Gastrocnemius medialis (tissue), 4 donors: ENCODE measurements at regions of chr6 and their contacts with region 1.

Region 1: DNA sequence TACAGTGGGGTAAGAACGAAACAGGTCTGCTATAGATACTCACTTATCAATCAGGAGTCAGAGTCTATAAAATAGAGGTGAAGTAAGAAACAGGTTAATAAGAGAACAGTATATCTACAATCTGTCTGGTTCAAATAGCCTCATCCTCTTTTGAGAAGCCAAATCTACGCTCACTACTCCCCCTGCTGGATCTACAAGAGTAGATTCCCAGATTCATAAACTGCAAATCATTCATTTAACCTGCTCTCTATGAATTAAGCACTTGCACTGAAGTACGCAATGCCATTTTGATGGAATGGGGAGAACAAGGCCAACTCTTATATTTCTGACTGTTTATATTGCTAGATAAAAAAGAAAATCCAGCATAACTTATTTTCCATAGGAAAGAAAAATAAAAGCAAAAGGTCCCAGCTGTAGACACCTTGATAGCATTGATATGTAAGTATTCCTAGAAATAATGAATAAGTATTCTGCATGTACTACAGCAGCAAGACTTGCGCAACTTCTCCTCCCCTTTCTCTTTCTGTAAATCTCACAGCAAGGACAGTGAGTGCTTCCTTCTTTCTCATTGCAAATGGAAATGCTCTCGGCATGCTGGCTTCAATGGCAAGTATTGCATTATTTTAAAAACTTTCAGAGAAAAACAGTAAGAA is 92.3 kb downstream of the RFX6 start:
- DNase-seq: peak in 1 of 2 donors; percentile 5
- ATAC-seq: peak in 1 of 2 donors; percentile 53
- H3K4me3 ChIP-seq: no peak overlapping the region
- H3K27ac ChIP-seq: no peak overlapping the region
- H3K4me1 ChIP-seq: peaks cover 9 to 13% of the 10 kb centered on the region in 2 donors
- H3K27me3 ChIP-seq: no peaks in the 10 kb centered on the region
- CTCF ChIP-seq: peak; percentile 35 to 72 (median 44)
- POLR2A ChIP-seq: no peak

Region 2: DNA sequence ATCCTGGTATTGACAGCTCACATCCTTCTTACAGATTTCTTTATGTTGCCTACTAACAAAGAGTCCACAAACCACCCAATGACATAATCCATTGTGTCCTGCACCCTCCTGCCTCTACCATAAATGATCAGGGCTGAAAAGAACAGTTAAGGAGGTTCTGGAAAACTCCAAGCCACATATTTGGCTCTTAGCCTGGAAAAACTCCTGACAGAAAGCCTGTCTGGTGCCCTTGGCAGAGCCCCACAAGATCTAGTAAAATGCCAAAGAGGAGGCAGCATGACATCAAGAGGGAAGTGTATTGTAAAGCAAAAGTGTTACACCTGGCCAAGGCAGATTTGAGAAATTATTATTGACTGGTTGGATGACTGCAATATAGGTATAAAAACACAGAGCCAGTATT is 169.6 kb after region 1 on chr6:
- in situ Hi-C with region 1: loop called in 1 of 4 experiments (anchors 10 kb)
- intact Hi-C with region 1: no loop called
- DNase-seq: peak; percentile 74 to 76
- ATAC-seq: peak; percentile 65 to 73
- H3K4me3 ChIP-seq: no peak overlapping the region
- H3K27ac ChIP-seq: peak overlapping the region; percentile 88 to 94 (median 92)
- H3K4me1 ChIP-seq: peaks cover 27 to 36% of the 10 kb centered on the region in 2 donors
- H3K27me3 ChIP-seq: no peaks in the 10 kb centered on the region
- CTCF ChIP-seq: no peak
- POLR2A ChIP-seq: no peak

Region 3: GRCh38 chr6:117317261-117317660 is 347.9 kb after region 1 on chr6:
- in situ Hi-C with region 1: loop called in 2 of 4 experiments (anchors 5 to 10 kb)
- intact Hi-C with region 1: loop called (anchors 5 kb)
- DNase-seq: no peak
- ATAC-seq: peak; percentile 73 to 79
- H3K4me3 ChIP-seq: no peak overlapping the region
- H3K27ac ChIP-seq: no peak overlapping the region
- H3K4me1 ChIP-seq: peaks cover 0 to 6% of the 10 kb centered on the region in 2 donors
- H3K27me3 ChIP-seq: no peaks in the 10 kb centered on the region
- CTCF ChIP-seq: peak; percentile 54 to 70 (median 63)
- POLR2A ChIP-seq: no peak

Region 4: DNA sequence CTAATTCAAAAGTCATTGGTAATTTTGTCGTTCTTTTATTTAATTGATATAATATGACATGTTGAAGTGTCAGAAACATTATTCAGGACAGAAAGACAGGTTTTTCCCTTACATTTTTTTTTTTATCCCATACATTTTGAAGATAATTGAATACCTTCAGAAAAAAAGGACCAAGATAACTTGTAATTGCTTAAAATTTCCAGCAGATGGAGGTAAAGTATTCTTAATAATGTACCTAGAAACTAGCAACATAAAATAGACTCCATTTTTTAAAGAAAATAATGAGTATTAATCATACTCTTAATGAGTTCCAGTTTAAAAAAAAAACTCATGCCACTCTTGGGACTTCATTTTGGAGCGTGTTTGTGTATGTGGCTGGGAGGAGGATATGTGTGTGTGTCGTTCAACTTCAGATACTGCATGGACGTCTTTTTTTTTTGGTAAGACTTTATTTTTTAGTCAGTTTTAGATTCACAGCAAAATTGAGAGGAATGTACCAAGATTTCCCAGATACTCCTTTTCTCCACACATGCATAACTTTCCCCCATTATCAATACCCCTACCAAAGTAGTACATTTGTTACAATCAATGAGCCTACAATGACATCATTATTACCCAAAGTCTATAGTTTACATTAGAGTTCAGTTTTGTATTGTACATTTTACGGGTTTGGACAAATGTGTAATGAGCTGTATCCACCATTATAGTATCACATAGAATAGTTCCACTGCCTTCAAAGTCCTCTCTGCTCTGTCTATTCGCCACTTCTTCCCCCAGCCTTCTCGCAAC is 377.0 kb after region 1 on chr6:
- in situ Hi-C with region 1: loop called in 1 of 4 experiments (anchors 25 kb)
- intact Hi-C with region 1: no loop called
- DNase-seq: no peak
- ATAC-seq: peak; percentile 33 to 44
- H3K4me3 ChIP-seq: peak overlapping the region in 2 of 4 donors; percentile 11 to 18
- H3K27ac ChIP-seq: no peak overlapping the region
- H3K4me1 ChIP-seq: no peaks in the 10 kb centered on the region
- H3K27me3 ChIP-seq: no peaks in the 10 kb centered on the region
- CTCF ChIP-seq: peak in 4 of 5 experiments; percentile 23 to 55 (median 53)
- POLR2A ChIP-seq: no peak